ENCODE measurements at regions of chr5 and their contacts with region 1.

Region 1: DNA sequence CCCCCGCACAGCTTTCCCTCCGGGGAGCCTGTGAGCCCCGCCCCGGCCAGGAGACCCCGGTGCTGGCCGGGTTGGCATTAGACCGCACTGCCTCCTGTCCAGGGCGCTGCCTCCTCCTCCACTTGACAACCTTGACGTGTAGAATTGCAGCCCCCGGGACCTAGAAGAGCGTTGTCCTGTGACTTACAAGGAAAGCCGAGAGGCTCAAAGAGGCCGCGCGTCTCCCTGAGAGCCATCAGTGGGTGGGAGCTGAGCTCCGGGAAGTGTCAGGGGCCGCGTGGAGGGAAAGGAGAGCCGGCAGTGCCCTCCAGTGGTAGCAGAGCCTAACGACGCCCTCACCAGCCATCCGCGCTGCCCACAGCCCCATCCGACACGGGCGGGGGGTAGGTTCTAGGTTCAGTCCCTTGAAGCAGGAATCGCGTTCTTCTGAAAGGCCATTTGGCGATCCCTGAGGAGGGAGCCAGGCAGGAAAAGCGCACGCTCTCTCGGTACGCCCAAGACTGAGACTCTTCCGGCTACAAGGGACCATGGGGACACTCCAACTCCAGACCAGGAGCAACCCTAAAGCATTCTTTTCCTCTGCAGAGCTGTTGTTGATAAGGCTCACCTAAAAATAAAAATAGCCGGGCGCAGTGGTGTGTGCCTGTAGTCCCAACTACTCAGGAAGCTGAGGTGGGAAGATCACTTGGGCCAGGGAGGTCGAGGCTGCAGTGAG is 40.6 kb upstream of the SAP30L start:
- DNase-seq: peak; percentile 82
- H3K4me3 Mint-ChIP-seq: peak overlapping the region; percentile 44
- H3K27ac Mint-ChIP-seq: no peak overlapping the region
- H3K4me1 Mint-ChIP-seq: peaks cover 10% of the 10 kb centered on the region
- H3K27me3 Mint-ChIP-seq: no peaks in the 10 kb centered on the region

Region 2: DNA sequence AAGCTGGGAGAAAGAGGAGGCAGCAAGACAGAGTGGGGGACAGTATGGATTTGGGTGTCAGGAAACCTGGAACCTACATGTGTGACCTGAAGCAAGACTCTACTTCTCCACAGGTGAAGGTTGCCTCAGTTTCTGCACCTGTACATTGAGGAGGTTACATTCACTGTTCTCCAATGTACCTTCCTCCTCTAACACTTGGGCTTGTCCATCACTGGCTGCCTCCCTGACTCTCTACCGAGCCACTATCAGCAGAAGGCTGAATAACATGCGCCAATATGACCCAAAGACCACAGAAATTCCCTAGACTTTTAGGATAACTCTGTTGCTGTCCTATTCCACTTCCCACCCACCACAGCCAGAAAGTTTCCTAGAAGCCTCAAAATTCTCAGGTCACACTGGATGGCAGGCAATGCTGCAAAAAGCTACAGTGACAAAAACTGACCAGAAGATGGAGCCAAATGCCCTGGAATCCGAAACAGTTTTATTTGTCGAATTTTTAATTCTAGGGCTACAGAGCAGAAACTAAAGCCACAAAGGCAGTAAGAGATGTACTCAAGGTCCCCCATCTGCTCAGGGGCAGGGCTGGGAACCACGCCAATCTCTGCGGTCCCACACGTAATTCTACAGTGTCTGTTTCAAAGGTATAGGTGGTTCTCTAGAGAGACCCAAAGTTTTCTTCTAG is 431.0 kb before region 1 on chr5:
- CTCF ChIA-PET with region 1: interaction called, 20 read pairs
- intact Hi-C with region 1: loop called (anchors 1 kb)
- DNase-seq: peak; percentile 58
- H3K4me3 Mint-ChIP-seq: no peak overlapping the region
- H3K27ac Mint-ChIP-seq: no peak overlapping the region
- H3K4me1 Mint-ChIP-seq: no peaks in the 10 kb centered on the region
- H3K27me3 Mint-ChIP-seq: peaks cover 3% of the 10 kb centered on the region

Region 3: GRCh38 chr5:154179846-154180710 is 225.2 kb before region 1 on chr5:
- CTCF ChIA-PET with region 1: interaction called, 14 read pairs
- intact Hi-C with region 1: loop called (anchors 1 kb)
- DNase-seq: peak; percentile 52
- H3K4me3 Mint-ChIP-seq: no peak overlapping the region
- H3K27ac Mint-ChIP-seq: no peak overlapping the region
- H3K4me1 Mint-ChIP-seq: no peaks in the 10 kb centered on the region
- H3K27me3 Mint-ChIP-seq: peaks cover 4% of the 10 kb centered on the region

Region 4: GRCh38 chr5:154189819-154190594 is 215.2 kb before region 1 on chr5:
- CTCF ChIA-PET with region 1: interaction called, 49 read pairs
- intact Hi-C with region 1: loop called (anchors 2 kb)
- DNase-seq: peak; percentile 82
- H3K4me3 Mint-ChIP-seq: peak overlapping the region; percentile 81
- H3K27ac Mint-ChIP-seq: no peak overlapping the region
- H3K4me1 Mint-ChIP-seq: peaks cover 32% of the 10 kb centered on the region
- H3K27me3 Mint-ChIP-seq: peaks cover 7% of the 10 kb centered on the region

Region 5: GRCh38 chr5:154196955-154197652 is 208.1 kb before region 1 on chr5:
- CTCF ChIA-PET with region 1: interaction called, 49 read pairs
- intact Hi-C with region 1: no loop called
- DNase-seq: no peak
- H3K4me3 Mint-ChIP-seq: no peak overlapping the region
- H3K27ac Mint-ChIP-seq: peak overlapping the region; percentile 86
- H3K4me1 Mint-ChIP-seq: peaks cover 67% of the 10 kb centered on the region
- H3K27me3 Mint-ChIP-seq: no peaks in the 10 kb centered on the region

Region 6: DNA sequence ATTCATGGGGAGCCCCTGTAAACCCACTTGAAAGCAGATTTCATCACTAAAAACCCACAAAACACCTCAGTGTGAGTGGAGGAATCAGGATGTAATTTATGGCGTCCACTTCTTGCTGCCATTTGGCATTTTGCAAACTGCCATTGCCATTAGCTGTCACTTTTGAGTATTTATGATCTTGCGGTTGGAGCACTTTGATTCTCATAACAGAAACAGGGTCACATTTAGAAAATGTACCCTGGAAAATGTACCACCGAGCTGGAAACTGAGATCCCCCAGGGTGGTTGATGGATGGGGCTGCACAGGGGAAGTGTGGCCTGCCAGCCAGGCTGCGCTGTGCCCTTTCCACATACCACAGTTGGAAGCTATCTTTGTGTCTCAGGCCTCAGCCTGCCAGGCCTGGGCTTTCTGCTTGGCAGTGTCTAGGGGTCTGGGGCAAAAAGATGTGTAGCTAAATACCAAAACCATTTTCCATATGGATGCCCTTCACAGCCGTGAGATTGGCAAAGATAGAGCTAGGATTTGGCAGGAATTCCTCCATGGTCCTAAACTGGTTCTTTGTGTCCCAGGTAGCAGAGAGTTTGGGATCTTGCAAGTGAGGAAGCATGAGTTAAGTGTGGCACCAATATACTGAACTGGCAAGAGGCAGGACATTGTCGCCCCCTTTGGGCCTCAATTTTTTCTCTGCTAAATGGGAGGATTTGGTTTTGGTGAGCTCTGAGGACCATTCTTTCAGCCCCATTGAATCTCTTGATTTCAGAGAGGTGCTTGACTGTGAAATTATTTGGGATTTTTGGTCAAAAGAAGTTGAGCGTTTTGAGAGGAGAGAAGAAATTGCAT is 168.5 kb before region 1 on chr5:
- CTCF ChIA-PET with region 1: interaction called, 3 read pairs
- intact Hi-C with region 1: loop called (anchors 1 kb)
- DNase-seq: peak; percentile 60
- H3K4me3 Mint-ChIP-seq: no peak overlapping the region
- H3K27ac Mint-ChIP-seq: no peak overlapping the region
- H3K4me1 Mint-ChIP-seq: peaks cover 38% of the 10 kb centered on the region
- H3K27me3 Mint-ChIP-seq: no peaks in the 10 kb centered on the region

Region 7: DNA sequence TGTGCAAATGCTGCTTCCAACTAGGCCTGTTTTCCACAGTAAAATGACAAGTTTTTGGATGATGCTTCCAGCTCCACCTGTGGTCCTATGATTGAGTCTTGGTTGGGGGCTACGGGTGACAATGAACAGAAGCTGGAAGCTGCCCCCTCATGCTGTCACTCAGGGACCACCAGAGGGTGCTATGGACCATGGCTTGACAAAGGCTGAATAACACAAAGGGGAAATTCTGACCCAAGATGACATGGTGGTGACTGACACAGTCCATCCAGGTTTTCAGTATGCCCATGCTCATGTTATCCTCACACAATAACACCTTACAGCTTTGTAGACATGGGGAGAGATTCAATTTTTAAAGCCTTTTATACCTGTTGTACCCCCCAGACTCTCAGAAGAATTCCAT is 16.6 kb after region 1 on chr5:
- CTCF ChIA-PET with region 1: interaction called, 11 read pairs
- intact Hi-C with region 1: no loop called
- DNase-seq: peak; percentile 43
- H3K4me3 Mint-ChIP-seq: no peak overlapping the region
- H3K27ac Mint-ChIP-seq: no peak overlapping the region
- H3K4me1 Mint-ChIP-seq: peaks cover 2% of the 10 kb centered on the region
- H3K27me3 Mint-ChIP-seq: no peaks in the 10 kb centered on the region

Measured in activated naive CD4-positive, alpha-beta T cell treated with anti-CD3 and anti-CD28 coated beads for 36 hours (primary cell).